H1 (cell line): ENCODE measurements at regions of chr2 and their contacts with region 1.

Region 1: DNA sequence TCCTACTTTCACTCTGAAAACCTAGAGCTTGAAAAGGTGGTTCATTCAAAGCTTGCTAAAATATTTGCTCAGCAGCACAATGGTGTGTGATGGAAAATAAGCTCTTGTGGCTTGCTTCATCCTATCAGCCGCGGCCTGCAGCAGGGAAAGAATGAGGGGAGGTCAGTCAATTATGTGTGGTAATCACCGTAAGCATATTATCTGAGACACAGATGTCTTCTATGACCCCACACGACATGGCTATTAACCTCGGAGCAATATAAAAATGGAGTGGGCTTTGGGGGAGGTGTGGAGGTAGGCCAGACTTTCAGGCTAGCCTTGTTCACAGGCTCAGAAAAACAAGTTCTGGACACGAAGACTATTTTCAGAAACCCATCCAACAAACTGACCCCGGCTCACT is 98.4 kb upstream of the SIX3 start:
- DNase-seq: no peak
- H3K4me3 ChIP-seq: no peak overlapping the region
- H3K27ac ChIP-seq: no peak overlapping the region
- H3K4me1 ChIP-seq: no peaks in the 10 kb centered on the region
- H3K27me3 ChIP-seq: no peaks in the 10 kb centered on the region
- CTCF ChIP-seq: no peak
- EP300 ChIP-seq: no peak
- POLR2A ChIP-seq: no peak
- RAD21 ChIP-seq: no peak

Region 2: DNA sequence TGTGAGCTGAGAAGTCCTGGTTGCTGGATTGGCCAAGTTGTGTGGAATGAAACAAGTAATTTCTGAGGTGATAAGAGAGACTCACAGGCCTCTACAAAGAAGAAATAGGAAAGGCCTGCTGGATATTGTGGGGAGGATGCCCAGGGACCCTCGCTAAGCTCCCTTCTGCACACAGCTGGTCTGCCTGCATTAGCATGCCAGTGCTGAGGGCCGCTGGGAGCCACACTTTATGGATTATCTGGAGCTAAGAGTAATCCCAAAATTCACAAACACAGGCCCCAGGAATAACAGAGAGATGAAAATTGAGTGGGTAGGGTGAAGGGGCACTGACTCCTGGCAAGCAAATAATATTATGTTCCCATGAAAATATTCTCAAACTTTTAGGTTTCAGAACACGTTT is 16.5 kb before region 1 on chr2:
- CTCF ChIA-PET with region 1: interaction called, 10 read pairs
- POLR2A ChIA-PET with region 1: interaction called, 3 read pairs
- DNase-seq: no peak
- H3K4me3 ChIP-seq: no peak overlapping the region
- H3K27ac ChIP-seq: no peak overlapping the region
- H3K4me1 ChIP-seq: no peaks in the 10 kb centered on the region; a peak in 1 of 7 replicates
- H3K27me3 ChIP-seq: no peaks in the 10 kb centered on the region
- CTCF ChIP-seq: no peak
- EP300 ChIP-seq: no peak
- POLR2A ChIP-seq: no peak
- RAD21 ChIP-seq: no peak